WTC11 (cell line): ENCODE measurements at regions of chr19 and their contacts with region 1.

Region 1: GRCh38 chr19:4606921-4607678 is 32.2 kb upstream of the TNFAIP8L1 start:
- DNase-seq: peak; percentile 53
- ATAC-seq: peak; percentile 71
- H3K4me3 Mint-ChIP-seq: peak overlapping the region; percentile 27
- H3K27ac Mint-ChIP-seq: no peak overlapping the region
- H3K4me1 Mint-ChIP-seq: peaks cover 15% of the 10 kb centered on the region
- H3K27me3 Mint-ChIP-seq: peaks cover 30% of the 10 kb centered on the region
- CTCF ChIP-seq: no peak

Region 2: DNA sequence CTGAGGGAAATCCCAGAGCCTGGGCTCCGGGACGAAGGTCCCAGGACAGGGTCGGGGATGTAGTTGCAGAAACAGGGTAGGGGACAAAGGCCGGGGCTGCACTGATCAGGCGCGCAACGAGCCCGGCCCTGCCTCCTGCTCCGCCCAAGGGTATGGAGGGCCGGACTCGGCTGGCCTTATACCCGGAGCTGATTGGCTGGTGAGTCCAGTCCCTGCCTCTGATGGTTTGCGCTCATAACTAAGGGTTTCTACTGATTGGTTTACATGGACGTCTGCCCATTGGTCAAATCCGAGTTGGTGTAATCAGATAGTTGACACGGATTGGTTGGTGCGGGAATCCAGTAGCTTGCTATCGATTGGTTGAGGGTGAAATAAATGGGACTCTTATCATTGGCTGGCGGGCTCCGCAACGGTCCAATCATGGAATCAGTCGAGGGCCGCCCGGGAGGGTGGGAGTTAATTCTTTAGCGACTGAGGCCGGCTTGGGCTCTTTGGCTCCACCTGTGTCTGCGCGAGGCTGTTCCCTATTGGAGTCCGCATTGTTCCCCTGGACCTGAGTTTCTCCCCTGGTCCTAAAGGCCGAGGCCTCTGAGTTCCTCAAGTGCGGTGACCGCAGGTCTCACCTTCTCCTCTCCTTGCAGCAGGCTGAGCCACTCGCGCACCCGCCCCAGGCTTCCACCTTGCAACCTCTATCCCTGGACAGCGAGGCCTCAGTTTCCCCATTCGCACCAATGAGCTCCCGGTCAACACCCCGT is 264.3 kb before region 1 on chr19:
- CTCF ChIA-PET with region 1: no interaction called
- POLR2A ChIA-PET with region 1: no interaction called
- DNase-seq: peak; percentile 96
- ATAC-seq: peak; percentile 93
- H3K4me3 Mint-ChIP-seq: peak overlapping the region; percentile 85
- H3K27ac Mint-ChIP-seq: peak overlapping the region; percentile 98
- H3K4me1 Mint-ChIP-seq: peaks cover 15% of the 10 kb centered on the region
- H3K27me3 Mint-ChIP-seq: peaks cover 12% of the 10 kb centered on the region
- CTCF ChIP-seq: no peak

Region 3: DNA sequence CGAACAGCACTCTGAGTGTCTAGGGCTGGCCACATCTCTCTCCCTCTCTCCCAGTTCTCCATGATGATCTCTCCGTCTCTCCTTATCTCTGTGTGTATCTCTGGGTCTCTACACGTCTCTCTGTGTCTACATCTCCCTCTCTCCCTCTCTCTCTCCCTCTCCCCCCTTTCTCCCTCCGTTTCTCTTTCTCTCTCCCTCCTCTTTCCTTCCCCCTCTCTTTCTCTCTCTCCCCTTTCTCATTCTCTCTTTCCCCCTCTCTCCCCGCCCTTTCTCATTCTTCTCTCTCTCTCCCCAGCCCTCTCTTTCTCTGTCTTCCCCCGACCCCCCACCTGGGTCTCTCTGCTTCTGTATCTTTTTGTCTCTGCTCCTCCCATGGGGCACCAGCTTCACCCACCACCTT is 10.9 kb after region 1 on chr19:
- CTCF ChIA-PET with region 1: interaction called, 17 read pairs
- POLR2A ChIA-PET with region 1: no interaction called
- DNase-seq: no peak
- ATAC-seq: no peak
- H3K4me3 Mint-ChIP-seq: no peak overlapping the region
- H3K27ac Mint-ChIP-seq: no peak overlapping the region
- H3K4me1 Mint-ChIP-seq: peaks cover 3% of the 10 kb centered on the region; the same call in 1 of the 2 replicates
- H3K27me3 Mint-ChIP-seq: peaks cover 28% of the 10 kb centered on the region
- CTCF ChIP-seq: no peak

Region 4: GRCh38 chr19:4624733-4625362 is 17.7 kb after region 1 on chr19:
- CTCF ChIA-PET with region 1: interaction called, 17 read pairs
- POLR2A ChIA-PET with region 1: no interaction called
- DNase-seq: peak; percentile 62
- ATAC-seq: peak; percentile 71
- H3K4me3 Mint-ChIP-seq: no peak overlapping the region
- H3K27ac Mint-ChIP-seq: no peak overlapping the region; the same call in 1 of the 2 replicates
- H3K4me1 Mint-ChIP-seq: peaks cover 12% of the 10 kb centered on the region
- H3K27me3 Mint-ChIP-seq: peaks cover 5% of the 10 kb centered on the region
- CTCF ChIP-seq: no peak; the same call in 1 of the 2 replicates